ENCODE measurements at regions of chr5 and their contacts with region 1.

Region 1: GRCh38 chr5:143605403-143606005 is 202.0 kb upstream of the NR3C1 start:
- DNase-seq: peak; percentile 60
- ATAC-seq: peak; percentile 68
- H3K4me3 ChIP-seq: no peak overlapping the region; the same call in 1 of the 2 replicates
- H3K27ac ChIP-seq: peak overlapping the region; percentile 69
- H3K4me1 ChIP-seq: peaks cover 22% of the 10 kb centered on the region
- H3K27me3 ChIP-seq: no peaks in the 10 kb centered on the region
- CTCF ChIP-seq: no peak
- EP300 ChIP-seq: peak in 1 of 2 experiments; percentile 40; a peak in 2 of 4 replicates
- POLR2A ChIP-seq: no peak
- RAD21 ChIP-seq: 0 out of 2 replicates have a peak, but pooled peaks have one; percentile 9

Region 2: GRCh38 chr5:142472300-142472951 is 1133.1 kb before region 1 on chr5:
- CTCF ChIA-PET with region 1: no interaction called
- POLR2A ChIA-PET with region 1: no interaction called
- RAD21 ChIA-PET with region 1: no interaction called
- SMC1A ChIA-PET with region 1: no interaction called
- in situ Hi-C with region 1: no loop called
- intact Hi-C with region 1: no loop called
- DNase-seq: no peak
- ATAC-seq: peak; percentile 69
- H3K4me3 ChIP-seq: no peak overlapping the region
- H3K27ac ChIP-seq: no peak overlapping the region
- H3K4me1 ChIP-seq: no peaks in the 10 kb centered on the region
- H3K27me3 ChIP-seq: peaks cover 0 to 2% of the 10 kb centered on the region in 2 experiments; a peak in 1 of 4 replicates
- CTCF ChIP-seq: no peak
- EP300 ChIP-seq: no peak
- POLR2A ChIP-seq: no peak
- RAD21 ChIP-seq: no peak

Region 3: DNA sequence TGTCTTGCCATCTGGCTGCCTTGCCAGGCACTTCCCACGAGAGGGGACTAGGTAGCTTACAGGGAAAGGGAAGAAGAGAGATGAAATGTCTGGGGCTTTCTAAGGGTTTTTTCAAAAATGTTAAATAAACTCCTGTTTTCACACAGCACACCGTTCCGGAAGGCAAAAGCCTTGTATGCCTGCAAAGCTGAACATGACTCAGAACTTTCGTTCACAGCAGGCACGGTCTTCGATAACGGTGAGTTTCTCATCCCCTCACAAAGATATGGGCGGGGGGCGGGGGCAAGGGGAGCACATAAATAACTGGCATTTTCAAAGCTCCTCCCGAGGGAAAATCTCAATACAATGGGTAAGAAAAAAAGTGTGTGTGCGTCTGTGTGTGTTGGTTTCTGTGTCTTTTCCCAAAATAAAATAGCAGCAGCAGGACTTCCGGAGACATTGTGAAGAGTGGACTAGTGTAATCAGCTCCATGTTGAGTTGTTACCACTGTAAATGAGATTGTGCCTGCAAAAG is 391.6 kb before region 1 on chr5:
- CTCF ChIA-PET with region 1: no interaction called
- POLR2A ChIA-PET with region 1: no interaction called
- RAD21 ChIA-PET with region 1: no interaction called
- SMC1A ChIA-PET with region 1: no interaction called
- in situ Hi-C with region 1: no loop called
- intact Hi-C with region 1: loop called (anchors 5 kb)
- DNase-seq: peak; percentile 97
- ATAC-seq: peak; percentile 68
- H3K4me3 ChIP-seq: peak overlapping the region; percentile 6; the same call in 1 of the 2 replicates
- H3K27ac ChIP-seq: peak overlapping the region; percentile 100
- H3K4me1 ChIP-seq: peaks cover 76% of the 10 kb centered on the region
- H3K27me3 ChIP-seq: no peaks in the 10 kb centered on the region
- CTCF ChIP-seq: peak; percentile 38 to 61 (median 47); a peak in 5 of 6 replicates
- EP300 ChIP-seq: peak; percentile 73 to 82
- POLR2A ChIP-seq: peak; percentile 45
- RAD21 ChIP-seq: peak; percentile 76

Region 4: GRCh38 chr5:143576711-143577484 is 28.6 kb before region 1 on chr5:
- CTCF ChIA-PET with region 1: no interaction called
- POLR2A ChIA-PET with region 1: no interaction called
- RAD21 ChIA-PET with region 1: interaction called, 16 read pairs
- SMC1A ChIA-PET with region 1: interaction called, 17 read pairs
- in situ Hi-C with region 1: no loop called
- intact Hi-C with region 1: no loop called
- DNase-seq: no peak
- ATAC-seq: no peak
- H3K4me3 ChIP-seq: no peak overlapping the region
- H3K27ac ChIP-seq: no peak overlapping the region
- H3K4me1 ChIP-seq: peaks cover 3% of the 10 kb centered on the region; the same call in 1 of the 2 replicates
- H3K27me3 ChIP-seq: no peaks in the 10 kb centered on the region
- CTCF ChIP-seq: no peak
- EP300 ChIP-seq: no peak
- POLR2A ChIP-seq: no peak
- RAD21 ChIP-seq: no peak

Region 5: GRCh38 chr5:143582869-143583268 is 22.6 kb before region 1 on chr5:
- CTCF ChIA-PET with region 1: no interaction called
- POLR2A ChIA-PET with region 1: no interaction called
- RAD21 ChIA-PET with region 1: no interaction called
- SMC1A ChIA-PET with region 1: interaction called, 17 read pairs
- in situ Hi-C with region 1: no loop called
- intact Hi-C with region 1: no loop called
- DNase-seq: no peak
- ATAC-seq: peak; percentile 81
- H3K4me3 ChIP-seq: no peak overlapping the region
- H3K27ac ChIP-seq: no peak overlapping the region
- H3K4me1 ChIP-seq: peaks cover 7% of the 10 kb centered on the region
- H3K27me3 ChIP-seq: no peaks in the 10 kb centered on the region
- CTCF ChIP-seq: no peak
- EP300 ChIP-seq: no peak
- POLR2A ChIP-seq: no peak
- RAD21 ChIP-seq: 0 out of 2 replicates have a peak, but pooled peaks have one; percentile 2

Region 6: GRCh38 chr5:143592648-143593047 is 12.9 kb before region 1 on chr5:
- CTCF ChIA-PET with region 1: interaction called, 3 read pairs
- POLR2A ChIA-PET with region 1: interaction called, 11 read pairs
- RAD21 ChIA-PET with region 1: interaction called, 13 read pairs
- SMC1A ChIA-PET with region 1: interaction called, 16 read pairs
- in situ Hi-C with region 1: no loop called
- intact Hi-C with region 1: loop called (anchors 1 kb)
- DNase-seq: no peak
- ATAC-seq: peak; percentile 81
- H3K4me3 ChIP-seq: no peak overlapping the region
- H3K27ac ChIP-seq: peak overlapping the region; percentile 57
- H3K4me1 ChIP-seq: peaks cover 33% of the 10 kb centered on the region
- H3K27me3 ChIP-seq: no peaks in the 10 kb centered on the region
- CTCF ChIP-seq: no peak
- EP300 ChIP-seq: peak; percentile 16 to 56; a peak in 1 of 4 replicates
- POLR2A ChIP-seq: no peak
- RAD21 ChIP-seq: no peak

Region 7: GRCh38 chr5:143758750-143759149 is 153.2 kb after region 1 on chr5:
- CTCF ChIA-PET with region 1: no interaction called
- POLR2A ChIA-PET with region 1: no interaction called
- RAD21 ChIA-PET with region 1: no interaction called
- SMC1A ChIA-PET with region 1: interaction called, 9 read pairs
- in situ Hi-C with region 1: no loop called
- intact Hi-C with region 1: loop called (anchors 5 kb)
- DNase-seq: peak; percentile 51
- ATAC-seq: peak; percentile 78
- H3K4me3 ChIP-seq: no peak overlapping the region; the same call in 1 of the 2 replicates
- H3K27ac ChIP-seq: peak overlapping the region; percentile 59; the same call in 1 of the 2 replicates
- H3K4me1 ChIP-seq: peaks cover 32% of the 10 kb centered on the region
- H3K27me3 ChIP-seq: no peaks in the 10 kb centered on the region
- CTCF ChIP-seq: no peak
- EP300 ChIP-seq: peak; percentile 48 to 79; a peak in 2 of 4 replicates
- POLR2A ChIP-seq: no peak
- RAD21 ChIP-seq: no peak

Region 8: GRCh38 chr5:143957455-143957854 is 352.0 kb after region 1 on chr5:
- CTCF ChIA-PET with region 1: no interaction called
- POLR2A ChIA-PET with region 1: no interaction called
- RAD21 ChIA-PET with region 1: no interaction called
- SMC1A ChIA-PET with region 1: no interaction called
- in situ Hi-C with region 1: no loop called
- intact Hi-C with region 1: no loop called
- DNase-seq: no peak
- ATAC-seq: peak; percentile 55
- H3K4me3 ChIP-seq: no peak overlapping the region
- H3K27ac ChIP-seq: no peak overlapping the region
- H3K4me1 ChIP-seq: no peaks in the 10 kb centered on the region
- H3K27me3 ChIP-seq: no peaks in the 10 kb centered on the region
- CTCF ChIP-seq: peak; percentile 13 to 32 (median 26); a peak in 4 of 6 replicates
- EP300 ChIP-seq: no peak
- POLR2A ChIP-seq: no peak
- RAD21 ChIP-seq: peak; percentile 35

Measured in GM12878 (cell line).